SK-N-SH (cell line): ENCODE measurements at regions of chr22 and their contacts with region 1.

Region 1: DNA sequence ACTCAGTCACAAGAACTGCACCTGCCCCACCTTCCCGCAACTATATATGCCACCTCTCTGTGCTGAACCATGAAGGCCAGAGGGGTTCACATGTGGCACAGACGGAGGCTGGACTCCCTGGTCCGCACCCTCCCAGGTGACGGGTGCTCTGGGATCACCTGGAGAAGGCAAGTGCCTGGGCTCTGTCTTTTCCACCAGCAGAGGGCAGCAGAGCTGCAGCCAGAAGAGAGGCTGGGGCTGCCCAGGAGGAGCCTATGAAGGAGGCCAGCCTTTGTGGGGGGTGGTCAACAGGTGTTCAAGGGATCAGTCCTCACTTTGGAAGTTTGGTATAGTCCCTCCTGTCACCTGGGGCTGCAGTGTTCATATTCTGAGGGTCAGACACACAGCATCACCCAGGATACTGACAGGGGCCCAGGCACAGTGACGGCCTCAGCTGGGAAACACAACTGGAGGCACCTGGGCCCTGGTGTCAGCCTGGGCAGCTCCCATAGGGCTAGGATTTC is 39.2 kb upstream of the IGLL5 start:
- DNase-seq: peak; percentile 63
- H3K4me3 ChIP-seq: peak overlapping the region in 1 of 2 experiments; percentile 31; a peak in 1 of 4 replicates
- H3K27ac ChIP-seq: no peak overlapping the region
- H3K4me1 ChIP-seq: no peaks in the 10 kb centered on the region
- H3K27me3 ChIP-seq: no peaks in the 10 kb centered on the region; the same call in 1 of the 2 replicates
- CTCF ChIP-seq: peak; percentile 93
- EP300 ChIP-seq: no peak
- RAD21 ChIP-seq: peak; percentile 78

Region 2: DNA sequence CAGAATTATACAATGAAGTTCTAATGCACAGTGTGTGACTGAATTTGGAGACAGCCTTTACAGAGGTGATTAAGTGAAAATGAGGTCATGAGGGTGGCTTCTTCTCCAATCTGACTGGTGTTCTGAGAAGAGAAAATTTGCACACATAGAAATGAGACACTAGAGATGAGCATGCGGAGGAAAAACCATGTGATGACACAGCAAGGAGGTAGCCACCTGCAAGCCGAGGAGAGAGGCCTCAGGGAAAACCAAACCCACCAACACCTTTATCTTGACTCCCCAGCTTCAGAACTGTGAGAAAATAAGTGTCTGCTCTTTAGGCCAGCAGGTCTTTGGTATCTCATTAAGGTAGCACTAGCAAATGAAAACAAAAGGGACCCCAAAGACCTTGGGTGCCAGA is 110.8 kb before region 1 on chr22:
- CTCF ChIA-PET with region 1: no interaction called
- POLR2A ChIA-PET with region 1: no interaction called
- DNase-seq: no peak
- H3K4me3 ChIP-seq: no peak overlapping the region
- H3K27ac ChIP-seq: no peak overlapping the region
- H3K4me1 ChIP-seq: no peaks in the 10 kb centered on the region; a peak in 1 of 4 replicates
- H3K27me3 ChIP-seq: no peaks in the 10 kb centered on the region
- CTCF ChIP-seq: no peak
- EP300 ChIP-seq: no peak
- RAD21 ChIP-seq: no peak

Region 3: DNA sequence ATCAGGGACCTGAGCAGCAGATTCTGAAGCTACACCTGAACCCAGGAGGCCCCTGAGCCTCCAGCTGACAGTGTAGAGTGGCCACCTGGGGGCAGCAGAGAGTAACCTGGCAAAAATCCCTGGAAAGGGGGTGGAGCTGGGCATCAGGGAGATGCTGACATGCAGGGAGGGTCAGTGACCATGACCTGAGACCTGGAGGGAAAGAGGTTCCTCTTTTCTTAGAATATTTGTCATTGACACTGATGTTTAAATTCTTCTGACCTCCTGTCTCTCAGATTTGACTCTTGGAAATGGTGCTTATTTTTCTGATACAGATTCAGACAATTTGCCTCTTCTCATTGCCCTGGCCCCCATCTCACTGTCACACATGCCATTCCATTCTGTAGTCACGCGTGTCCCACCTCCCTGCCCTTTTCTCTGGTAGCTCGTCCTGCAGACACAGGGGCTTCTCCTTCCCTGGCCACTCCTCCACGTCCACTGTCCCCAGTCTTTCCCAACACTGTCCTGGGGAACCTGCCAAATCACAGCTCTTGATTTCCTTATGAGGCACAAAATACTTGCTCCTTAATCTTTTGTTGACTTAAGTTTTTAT is 78.0 kb before region 1 on chr22:
- CTCF ChIA-PET with region 1: interaction called, 11 read pairs
- POLR2A ChIA-PET with region 1: no interaction called
- DNase-seq: peak; percentile 66
- H3K4me3 ChIP-seq: no peak overlapping the region; a peak in 1 of 4 replicates
- H3K27ac ChIP-seq: no peak overlapping the region
- H3K4me1 ChIP-seq: no peaks in the 10 kb centered on the region; a peak in 1 of 4 replicates
- H3K27me3 ChIP-seq: no peaks in the 10 kb centered on the region; the same call in 1 of the 2 replicates
- CTCF ChIP-seq: peak; percentile 73
- EP300 ChIP-seq: no peak
- RAD21 ChIP-seq: no peak

Region 4: DNA sequence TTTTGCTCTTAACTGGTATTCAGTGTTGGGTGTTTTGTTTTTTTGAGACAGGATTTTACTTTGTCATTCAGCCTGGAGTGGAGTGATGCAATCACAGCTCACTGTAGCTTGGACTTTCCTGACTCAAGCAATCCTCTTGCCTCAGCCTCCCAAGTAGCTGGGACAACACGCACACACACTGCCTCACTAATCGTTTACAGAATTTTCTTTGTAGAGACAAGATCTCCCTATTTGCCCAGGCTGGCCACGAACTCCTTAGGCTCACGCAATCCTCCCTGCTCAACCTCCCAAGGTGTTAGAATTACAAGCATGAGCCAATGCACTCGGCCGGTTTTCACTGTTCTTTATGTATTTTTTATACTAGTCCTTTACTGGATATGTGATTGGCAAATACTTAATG is 11.8 kb before region 1 on chr22:
- CTCF ChIA-PET with region 1: interaction called, 43 read pairs
- POLR2A ChIA-PET with region 1: no interaction called
- DNase-seq: no peak
- H3K4me3 ChIP-seq: no peak overlapping the region
- H3K27ac ChIP-seq: no peak overlapping the region
- H3K4me1 ChIP-seq: peaks cover 0 to 3% of the 10 kb centered on the region in 2 experiments; a peak in 1 of 4 replicates
- H3K27me3 ChIP-seq: no peaks in the 10 kb centered on the region; the same call in 1 of the 2 replicates
- CTCF ChIP-seq: no peak
- EP300 ChIP-seq: no peak
- RAD21 ChIP-seq: no peak

Region 5: GRCh38 chr22:22870577-22871404 is 22.4 kb after region 1 on chr22:
- CTCF ChIA-PET with region 1: interaction called, 20 read pairs
- POLR2A ChIA-PET with region 1: no interaction called
- DNase-seq: no peak
- H3K4me3 ChIP-seq: no peak overlapping the region
- H3K27ac ChIP-seq: no peak overlapping the region
- H3K4me1 ChIP-seq: no peaks in the 10 kb centered on the region
- H3K27me3 ChIP-seq: no peaks in the 10 kb centered on the region
- CTCF ChIP-seq: no peak
- EP300 ChIP-seq: no peak
- RAD21 ChIP-seq: no peak

Region 6: GRCh38 chr22:22935546-22936157 is 87.2 kb after region 1 on chr22:
- CTCF ChIA-PET with region 1: interaction called, 34 read pairs
- POLR2A ChIA-PET with region 1: no interaction called
- DNase-seq: no peak
- H3K4me3 ChIP-seq: no peak overlapping the region
- H3K27ac ChIP-seq: no peak overlapping the region; a peak in 1 of 4 replicates
- H3K4me1 ChIP-seq: peaks cover 0 to 4% of the 10 kb centered on the region in 2 experiments; a peak in 1 of 4 replicates
- H3K27me3 ChIP-seq: no peaks in the 10 kb centered on the region; the same call in 1 of the 2 replicates
- CTCF ChIP-seq: no peak
- EP300 ChIP-seq: no peak
- RAD21 ChIP-seq: no peak

Region 7: DNA sequence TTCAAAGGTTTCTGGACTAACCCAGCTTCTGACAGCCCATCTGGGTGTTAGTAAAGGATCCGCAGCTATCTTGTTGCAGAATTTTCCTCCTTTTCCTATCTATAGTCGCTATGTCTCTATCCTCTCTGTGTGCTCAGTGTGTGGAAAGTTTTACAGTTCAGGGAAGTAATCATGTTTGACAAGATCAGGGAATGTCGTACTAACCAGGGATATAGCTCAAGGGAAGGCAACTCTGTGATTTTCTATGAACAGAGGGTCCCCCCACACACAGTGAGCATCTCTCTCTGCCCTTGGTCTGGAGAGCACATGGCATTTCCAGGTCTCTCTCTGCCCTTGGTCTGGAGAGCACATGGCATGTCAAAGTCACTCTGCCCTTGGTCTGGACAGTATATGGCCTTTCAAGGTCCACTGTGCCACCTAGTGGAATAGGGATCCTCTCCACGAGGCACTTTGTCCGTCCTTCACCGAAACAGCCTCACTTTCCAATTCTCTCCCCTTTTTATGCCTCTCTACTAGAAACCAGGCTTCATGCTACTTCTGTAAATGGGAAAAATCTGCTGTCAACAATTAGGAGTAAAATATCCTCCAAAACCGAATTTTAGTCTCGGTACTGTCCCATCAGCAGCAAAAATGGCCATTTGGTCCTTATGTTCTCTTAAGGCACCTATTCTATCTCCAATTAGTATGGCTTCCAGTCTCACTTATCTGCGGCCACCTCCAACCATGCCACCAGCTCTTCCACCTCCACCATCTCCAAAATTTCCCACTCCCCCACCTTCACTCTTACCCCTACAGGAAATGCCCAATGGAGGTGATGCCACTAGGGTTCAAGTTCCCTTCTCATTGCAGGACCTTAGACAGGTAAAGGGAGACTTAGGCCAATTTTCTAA is 127.9 kb after region 1 on chr22:
- CTCF ChIA-PET with region 1: interaction called, 18 read pairs
- POLR2A ChIA-PET with region 1: no interaction called
- DNase-seq: peak; percentile 36
- H3K4me3 ChIP-seq: no peak overlapping the region
- H3K27ac ChIP-seq: peak overlapping the region in 1 of 2 experiments; percentile 39; a peak in 2 of 4 replicates
- H3K4me1 ChIP-seq: peaks cover 0 to 16% of the 10 kb centered on the region in 2 experiments; a peak in 1 of 4 replicates
- H3K27me3 ChIP-seq: no peaks in the 10 kb centered on the region
- CTCF ChIP-seq: no peak
- EP300 ChIP-seq: peak in 1 of 2 experiments; percentile 86; a peak in 2 of 4 replicates
- RAD21 ChIP-seq: peak; percentile 63

Region 8: GRCh38 chr22:23256986-23257888 is 408.8 kb after region 1 on chr22:
- CTCF ChIA-PET with region 1: no interaction called
- POLR2A ChIA-PET with region 1: no interaction called
- DNase-seq: no peak
- H3K4me3 ChIP-seq: no peak overlapping the region
- H3K27ac ChIP-seq: no peak overlapping the region; a peak in 1 of 4 replicates
- H3K4me1 ChIP-seq: peaks cover 0 to 22% of the 10 kb centered on the region in 2 experiments; a peak in 1 of 4 replicates
- H3K27me3 ChIP-seq: no peaks in the 10 kb centered on the region
- CTCF ChIP-seq: no peak
- EP300 ChIP-seq: no peak
- RAD21 ChIP-seq: no peak

Region 9: GRCh38 chr22:23395530-23396361 is 547.3 kb after region 1 on chr22:
- CTCF ChIA-PET with region 1: no interaction called
- POLR2A ChIA-PET with region 1: no interaction called
- DNase-seq: no peak
- H3K4me3 ChIP-seq: no peak overlapping the region
- H3K27ac ChIP-seq: no peak overlapping the region
- H3K4me1 ChIP-seq: peaks cover 0 to 22% of the 10 kb centered on the region in 2 experiments; a peak in 1 of 4 replicates
- H3K27me3 ChIP-seq: no peaks in the 10 kb centered on the region
- CTCF ChIP-seq: no peak
- EP300 ChIP-seq: no peak
- RAD21 ChIP-seq: no peak